ENCODE measurements at regions of chr2 and their contacts with region 1.

Region 1: GRCh38 chr2:127649684-127650040 is 3.7 kb downstream of the GPR17 start:
- DNase-seq: peak; percentile 68
- ATAC-seq: peak; percentile 80
- H3K4me3 Mint-ChIP-seq: peak overlapping the region; percentile 52
- H3K27ac Mint-ChIP-seq: no peak overlapping the region
- H3K4me1 Mint-ChIP-seq: peaks cover 63% of the 10 kb centered on the region
- H3K27me3 Mint-ChIP-seq: no peaks in the 10 kb centered on the region
- CTCF ChIP-seq: no peak

Region 2: DNA sequence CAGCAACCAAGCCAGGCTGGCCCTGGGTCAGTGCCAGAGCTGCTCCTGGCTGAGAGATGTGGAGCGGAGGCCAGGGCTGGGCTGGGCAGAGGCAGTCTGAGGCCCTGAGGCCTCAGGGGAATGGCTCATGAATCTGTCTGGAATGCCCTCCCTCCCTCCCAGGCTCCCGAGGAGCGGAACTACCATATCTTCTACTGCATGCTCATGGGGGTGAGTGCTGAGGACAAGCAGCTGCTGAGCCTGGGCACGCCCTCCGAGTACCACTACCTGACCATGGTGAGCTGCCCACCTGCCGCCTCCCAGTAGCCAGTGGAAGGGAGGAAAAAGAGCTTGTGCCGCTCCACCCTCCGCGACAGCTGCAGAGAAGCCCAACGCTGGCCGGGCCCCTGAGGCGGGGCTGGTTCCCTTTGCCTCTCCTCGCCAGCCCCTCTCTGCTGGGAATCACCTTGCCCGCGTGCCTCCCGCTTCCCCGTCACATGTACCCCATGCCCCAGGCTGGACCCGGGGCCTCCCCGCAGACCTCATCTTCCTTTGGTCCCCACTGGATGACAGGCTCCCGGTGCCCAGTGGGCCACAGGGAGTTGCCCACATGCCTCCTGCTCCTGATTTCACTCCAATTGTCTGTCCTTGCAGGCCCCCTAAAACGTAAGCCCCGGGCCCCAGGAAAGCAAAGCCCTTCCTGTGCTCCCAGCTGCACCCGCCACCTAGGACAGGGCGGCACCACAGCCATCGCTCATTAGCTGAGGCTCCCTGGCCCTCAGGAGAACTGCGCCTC is 73.0 kb before region 1 on chr2:
- CTCF ChIA-PET with region 1: interaction called, 15 read pairs
- POLR2A ChIA-PET with region 1: no interaction called
- intact Hi-C with region 1: no loop called
- DNase-seq: no peak
- ATAC-seq: no peak
- H3K4me3 Mint-ChIP-seq: peak overlapping the region; percentile 50
- H3K27ac Mint-ChIP-seq: no peak overlapping the region
- H3K4me1 Mint-ChIP-seq: peaks cover 64% of the 10 kb centered on the region
- H3K27me3 Mint-ChIP-seq: no peaks in the 10 kb centered on the region
- CTCF ChIP-seq: no peak

Region 3: DNA sequence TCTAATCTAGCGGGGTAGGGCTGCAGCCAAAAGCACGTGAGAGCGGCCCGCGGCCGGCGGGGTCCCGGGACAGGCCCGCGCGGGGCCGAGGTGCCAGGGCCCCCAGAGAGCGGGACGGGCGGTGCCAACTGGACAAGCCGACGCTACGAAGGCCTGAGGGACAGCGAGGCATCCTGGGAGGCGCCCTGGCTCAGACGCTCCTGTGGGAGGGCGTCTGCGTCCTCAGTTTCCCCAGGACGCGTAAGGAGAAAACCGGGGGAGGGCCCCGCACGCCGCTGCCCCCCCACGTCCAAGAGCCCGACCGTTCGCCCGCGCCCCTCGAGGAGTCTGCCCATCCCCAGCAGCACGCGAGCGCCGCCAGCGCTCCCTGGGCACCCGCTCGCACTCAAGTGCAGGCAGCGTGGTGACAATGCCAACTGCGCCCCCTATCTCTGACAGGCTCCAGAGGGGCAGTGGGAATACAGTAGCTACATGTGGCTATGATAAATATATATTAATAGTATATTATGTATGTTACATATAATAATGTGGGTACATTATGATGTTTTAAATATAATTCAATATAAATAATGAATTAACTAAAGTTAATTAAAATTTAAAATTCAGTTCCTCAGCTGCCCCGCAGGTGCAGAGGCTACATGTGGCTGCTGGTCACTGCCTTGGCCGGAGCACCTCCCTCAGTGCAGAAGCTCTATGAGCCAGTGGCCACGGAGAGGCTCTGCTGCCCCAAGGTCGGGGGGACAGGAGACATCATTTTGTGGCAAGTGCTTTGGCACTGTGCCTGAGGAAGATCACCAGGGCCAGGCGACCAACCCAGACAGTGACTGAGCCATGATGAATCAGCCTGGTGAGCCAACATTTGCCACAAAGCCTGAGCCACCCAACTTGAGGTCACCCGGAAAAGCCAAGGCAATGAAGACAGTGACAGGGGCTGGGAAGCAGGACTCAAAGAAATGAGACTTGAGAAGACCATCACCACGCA is 46.1 kb after region 1 on chr2:
- CTCF ChIA-PET with region 1: interaction called, 3 read pairs
- POLR2A ChIA-PET with region 1: interaction called, 7 read pairs
- intact Hi-C with region 1: loop called (anchors 1 kb)
- DNase-seq: no peak
- ATAC-seq: peak; percentile 41
- H3K4me3 Mint-ChIP-seq: no peak overlapping the region
- H3K27ac Mint-ChIP-seq: no peak overlapping the region
- H3K4me1 Mint-ChIP-seq: peaks cover 7% of the 10 kb centered on the region
- H3K27me3 Mint-ChIP-seq: no peaks in the 10 kb centered on the region
- CTCF ChIP-seq: no peak